ENCODE measurements at regions of chr9 and their contacts with region 1.

Region 1: DNA sequence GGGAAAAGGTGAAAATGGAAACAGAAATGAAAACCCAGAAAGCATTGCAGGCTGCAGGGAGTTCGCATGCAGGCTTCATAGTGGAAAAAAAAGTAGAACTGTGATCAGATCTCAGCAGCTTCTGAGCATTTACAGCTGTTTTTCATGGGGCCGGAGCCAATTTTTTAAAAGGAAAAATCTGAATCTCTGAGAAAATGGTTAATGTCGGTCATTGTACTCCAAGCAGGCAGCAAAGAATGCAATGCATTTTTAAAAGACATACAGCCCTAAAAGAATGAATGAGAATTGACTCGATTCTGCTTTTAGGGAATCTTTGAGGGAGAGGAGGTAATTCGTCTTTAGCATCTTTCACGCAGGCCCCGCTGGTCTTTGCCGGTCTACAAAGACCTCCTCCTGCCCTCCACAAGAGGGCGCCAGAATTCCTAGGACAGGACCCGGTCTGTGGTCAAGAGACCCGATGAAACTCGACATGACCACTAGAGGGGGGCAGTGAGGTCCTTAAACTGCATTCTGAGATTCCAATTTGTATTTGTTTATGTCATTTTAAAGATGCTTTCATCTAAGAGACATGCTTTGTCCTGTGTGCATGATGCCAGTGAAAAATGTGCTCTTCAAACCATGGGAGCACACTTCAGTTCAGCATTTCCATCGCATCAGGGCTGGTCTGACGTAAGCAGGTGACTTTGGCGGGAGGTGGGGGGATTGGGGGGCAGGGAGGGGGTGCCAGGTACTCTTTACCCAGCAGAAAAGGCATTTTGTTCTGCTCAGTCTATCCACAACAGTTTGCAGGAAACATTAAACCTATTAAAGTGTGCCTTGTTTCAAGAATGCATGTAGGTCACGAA is 43.7 kb upstream of the TMEM252 start:
- DNase-seq: peak; percentile 66
- H3K4me3 ChIP-seq: no peak overlapping the region
- H3K27ac ChIP-seq: no peak overlapping the region
- H3K4me1 ChIP-seq: no peaks in the 10 kb centered on the region
- H3K27me3 ChIP-seq: no peaks in the 10 kb centered on the region
- CTCF ChIP-seq: peak; percentile 100

Region 2: GRCh38 chr9:68546596-68547390 is 37.6 kb before region 1 on chr9:
- CTCF ChIA-PET with region 1: no interaction called
- dilution Hi-C with region 1: no loop called
- in situ Hi-C with region 1: no loop called
- intact Hi-C with region 1: no loop called
- DNase-seq: no peak
- H3K4me3 ChIP-seq: no peak overlapping the region
- H3K27ac ChIP-seq: no peak overlapping the region
- H3K4me1 ChIP-seq: no peaks in the 10 kb centered on the region
- H3K27me3 ChIP-seq: no peaks in the 10 kb centered on the region
- CTCF ChIP-seq: no peak

Region 3: GRCh38 chr9:68949271-68950000 is 365.0 kb after region 1 on chr9:
- CTCF ChIA-PET with region 1: no interaction called
- dilution Hi-C with region 1: no loop called
- in situ Hi-C with region 1: no loop called
- intact Hi-C with region 1: loop called (anchors 1 kb)
- DNase-seq: peak; percentile 30
- H3K4me3 ChIP-seq: no peak overlapping the region
- H3K27ac ChIP-seq: no peak overlapping the region
- H3K4me1 ChIP-seq: peaks cover 8% of the 10 kb centered on the region
- H3K27me3 ChIP-seq: no peaks in the 10 kb centered on the region
- CTCF ChIP-seq: peak; percentile 9 to 32

Region 4: DNA sequence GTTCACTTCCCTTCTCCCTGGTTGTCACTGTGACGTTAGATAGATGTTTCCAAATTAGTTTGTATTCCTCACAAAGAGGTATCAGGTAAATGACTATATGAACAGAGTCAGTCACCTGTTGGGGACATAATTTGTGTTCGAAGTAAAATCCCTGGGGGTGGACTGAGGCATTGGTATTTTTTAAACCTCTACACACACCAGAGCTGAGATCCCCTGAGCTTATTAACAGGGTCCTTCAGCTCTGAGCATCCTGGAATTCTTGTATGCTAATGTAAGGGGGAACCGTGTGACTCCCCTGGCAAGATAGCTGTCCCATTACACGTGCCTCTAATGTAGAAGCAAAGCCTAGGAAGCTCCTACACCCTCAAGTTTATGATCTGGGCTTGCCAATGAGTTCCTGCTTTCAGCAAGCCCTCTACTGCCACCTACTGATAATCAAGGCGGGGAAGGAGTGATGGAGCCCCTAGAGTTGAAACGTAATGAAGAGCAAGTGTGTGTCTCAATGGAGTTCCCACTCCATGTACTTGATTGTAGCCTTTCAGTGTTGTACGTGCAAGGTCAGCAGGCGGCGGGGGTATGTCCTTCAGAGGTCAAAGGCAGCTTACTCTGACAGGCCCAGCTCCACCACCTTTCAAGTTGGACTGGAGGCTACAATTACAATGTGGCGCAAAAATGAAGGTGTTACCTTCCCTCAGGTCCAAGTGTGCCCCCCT is 415.1 kb after region 1 on chr9:
- CTCF ChIA-PET with region 1: no interaction called
- dilution Hi-C with region 1: loop called (anchors 25 kb)
- in situ Hi-C with region 1: loop called in 1 of 2 experiments (anchors 10 kb)
- intact Hi-C with region 1: loop called (anchors 1 kb)
- DNase-seq: peak; percentile 54
- H3K4me3 ChIP-seq: no peak overlapping the region
- H3K27ac ChIP-seq: no peak overlapping the region
- H3K4me1 ChIP-seq: no peaks in the 10 kb centered on the region
- H3K27me3 ChIP-seq: no peaks in the 10 kb centered on the region
- CTCF ChIP-seq: peak; percentile 90 to 97

Region 5: DNA sequence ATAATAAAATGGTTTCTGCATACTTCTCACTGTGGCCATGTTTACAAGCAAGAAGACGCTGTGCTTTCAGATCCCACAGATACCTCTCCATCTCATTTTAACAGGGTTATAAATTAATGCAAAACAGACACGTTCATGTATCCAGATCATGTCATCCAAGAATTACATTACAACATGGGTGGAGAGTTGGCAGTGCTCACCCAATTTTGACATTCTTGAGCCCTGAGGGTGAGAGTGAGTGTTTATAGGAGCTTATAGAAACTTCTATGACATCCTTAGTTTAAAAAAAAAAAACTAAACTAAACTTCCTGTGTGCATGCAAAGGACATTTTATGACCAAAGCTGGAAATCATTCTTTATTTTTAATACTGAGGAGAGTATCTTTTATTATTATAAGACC is 420.4 kb after region 1 on chr9:
- CTCF ChIA-PET with region 1: no interaction called
- dilution Hi-C with region 1: no loop called
- in situ Hi-C with region 1: loop called (anchors 5 to 10 kb)
- intact Hi-C with region 1: no loop called
- DNase-seq: no peak
- H3K4me3 ChIP-seq: no peak overlapping the region
- H3K27ac ChIP-seq: no peak overlapping the region
- H3K4me1 ChIP-seq: no peaks in the 10 kb centered on the region
- H3K27me3 ChIP-seq: peaks cover 2% of the 10 kb centered on the region
- CTCF ChIP-seq: no peak

Region 6: GRCh38 chr9:69027355-69028096 is 443.1 kb after region 1 on chr9:
- CTCF ChIA-PET with region 1: no interaction called
- dilution Hi-C with region 1: no loop called
- in situ Hi-C with region 1: no loop called
- intact Hi-C with region 1: loop called (anchors 1 kb)
- DNase-seq: peak; percentile 45
- H3K4me3 ChIP-seq: no peak overlapping the region
- H3K27ac ChIP-seq: no peak overlapping the region
- H3K4me1 ChIP-seq: peaks cover 3% of the 10 kb centered on the region
- H3K27me3 ChIP-seq: no peaks in the 10 kb centered on the region
- CTCF ChIP-seq: peak; percentile 79 to 85

Region 7: GRCh38 chr9:69223605-69224004 is 639.2 kb after region 1 on chr9:
- CTCF ChIA-PET with region 1: no interaction called
- dilution Hi-C with region 1: no loop called
- in situ Hi-C with region 1: loop called in 1 of 2 experiments (anchors 25 kb)
- intact Hi-C with region 1: no loop called
- DNase-seq: peak; percentile 49
- H3K4me3 ChIP-seq: no peak overlapping the region
- H3K27ac ChIP-seq: no peak overlapping the region
- H3K4me1 ChIP-seq: no peaks in the 10 kb centered on the region
- H3K27me3 ChIP-seq: no peaks in the 10 kb centered on the region
- CTCF ChIP-seq: peak; percentile 86 to 91